Activated CD4-positive, alpha-beta T cell treated with anti-CD3 and anti-CD28 coated beads for 36 hours (primary cell): ENCODE measurements at regions of chr7 and their contacts with region 1.

Region 1: GRCh38 chr7:130912862-130913631 is 179.0 kb upstream of the KLF14 start:
- DNase-seq: peak; percentile 92
- ATAC-seq: peak; percentile 73
- H3K4me3 Mint-ChIP-seq: peak overlapping the region; percentile 88
- H3K27ac Mint-ChIP-seq: peak overlapping the region; percentile 99
- H3K4me1 Mint-ChIP-seq: peaks cover 90% of the 10 kb centered on the region
- H3K27me3 Mint-ChIP-seq: no peaks in the 10 kb centered on the region

Region 2: DNA sequence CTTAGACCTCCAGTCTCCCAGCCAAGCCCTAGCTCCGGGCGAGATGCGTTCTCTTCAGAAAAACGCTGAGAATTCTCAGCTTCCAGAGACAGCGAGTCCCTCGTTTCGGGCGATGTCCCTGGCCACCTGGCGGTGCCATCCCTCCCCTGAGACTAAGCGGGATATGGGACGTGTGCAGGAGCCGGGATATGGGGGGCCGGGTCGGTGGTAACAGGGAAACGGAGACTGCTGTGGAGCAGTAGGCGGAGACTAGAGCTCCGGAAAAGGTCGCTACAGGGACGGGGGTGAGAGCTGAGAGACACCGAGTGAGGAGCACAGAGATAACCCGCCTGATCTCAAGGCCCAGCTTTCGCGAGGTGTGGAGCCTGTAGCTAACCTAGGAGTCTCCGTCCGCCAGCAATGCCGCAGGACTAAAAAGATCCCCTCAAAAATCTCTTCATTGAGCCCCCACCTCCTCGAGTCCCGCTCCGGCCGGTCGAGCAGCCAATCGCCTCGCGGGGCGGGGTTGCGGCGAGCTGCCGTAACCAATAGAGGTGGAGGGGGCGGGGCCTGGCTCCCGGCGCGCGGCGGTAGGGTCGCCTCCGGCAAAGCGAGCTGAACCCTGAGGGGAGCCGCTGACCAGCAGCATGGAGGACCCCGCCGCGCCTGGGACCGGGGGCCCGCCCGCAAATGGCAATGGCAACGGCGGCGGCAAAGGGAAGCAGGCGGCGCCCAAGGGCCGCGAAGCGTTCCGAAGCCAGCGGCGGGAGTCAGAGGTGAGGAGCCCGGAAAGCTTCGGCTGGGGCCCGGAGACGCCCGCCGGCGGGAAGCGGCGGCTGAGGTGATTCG is 1479.0 kb before region 1 on chr7 and contains the start of gene STRIP2:
- CTCF ChIA-PET with region 1: no interaction called
- POLR2A ChIA-PET with region 1: no interaction called
- intact Hi-C with region 1: loop called in 1 of 2 experiments (anchors 5 kb)
- DNase-seq: peak; percentile 96
- ATAC-seq: peak; percentile 80
- H3K4me3 Mint-ChIP-seq: peak within 1 kb of the TSS; percentile 90
- H3K27ac Mint-ChIP-seq: peak within 1 kb of the TSS; percentile 91
- H3K4me1 Mint-ChIP-seq: peaks cover 33% of the 10 kb centered on the region
- H3K27me3 Mint-ChIP-seq: peaks cover 7% of the 10 kb centered on the region
- total RNA-seq, gene STRIP2: 41.3 to 51.8 TPM

Region 3: DNA sequence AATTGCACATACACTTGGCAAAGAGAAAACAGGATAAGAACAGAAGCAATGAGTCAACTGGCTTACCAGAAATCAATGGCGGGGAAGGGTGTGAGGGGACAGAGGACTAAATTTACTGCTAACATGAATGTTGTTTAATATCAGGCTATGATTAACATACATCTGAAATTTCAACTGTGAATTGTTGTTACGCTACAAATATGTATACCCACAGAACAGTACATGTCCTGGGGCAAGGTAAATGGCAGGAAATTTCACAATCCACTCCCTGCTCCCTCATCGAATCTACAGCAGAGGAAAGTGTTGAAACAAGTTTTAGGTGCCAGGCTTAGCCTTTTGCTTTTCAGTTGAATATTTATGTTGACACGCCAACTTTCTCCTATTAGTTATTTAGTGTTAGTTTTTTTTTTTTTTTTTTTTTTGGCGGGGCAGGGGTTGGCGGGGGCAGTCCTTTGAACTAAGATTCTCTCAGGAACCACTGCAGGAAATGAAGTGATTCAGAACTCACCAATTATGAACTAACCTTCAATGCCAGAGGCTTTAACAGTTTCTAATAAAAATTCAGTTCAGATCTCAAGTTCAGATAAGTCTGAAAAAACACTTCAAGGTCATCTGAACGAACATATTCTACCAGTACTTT is 1059.3 kb before region 1 on chr7:
- CTCF ChIA-PET with region 1: no interaction called
- POLR2A ChIA-PET with region 1: no interaction called
- intact Hi-C with region 1: no loop called
- DNase-seq: no peak
- ATAC-seq: no peak
- H3K4me3 Mint-ChIP-seq: no peak overlapping the region
- H3K27ac Mint-ChIP-seq: no peak overlapping the region
- H3K4me1 Mint-ChIP-seq: peaks cover 38% of the 10 kb centered on the region
- H3K27me3 Mint-ChIP-seq: no peaks in the 10 kb centered on the region

Region 4: GRCh38 chr7:130543487-130544010 is 369.5 kb before region 1 on chr7:
- CTCF ChIA-PET with region 1: no interaction called
- POLR2A ChIA-PET with region 1: no interaction called
- intact Hi-C with region 1: no loop called
- DNase-seq: no peak
- ATAC-seq: no peak
- H3K4me3 Mint-ChIP-seq: no peak overlapping the region
- H3K27ac Mint-ChIP-seq: no peak overlapping the region
- H3K4me1 Mint-ChIP-seq: no peaks in the 10 kb centered on the region
- H3K27me3 Mint-ChIP-seq: no peaks in the 10 kb centered on the region

Region 5: GRCh38 chr7:130838738-130839137 is 74.3 kb before region 1 on chr7:
- CTCF ChIA-PET with region 1: no interaction called
- POLR2A ChIA-PET with region 1: interaction called, 4 read pairs
- intact Hi-C with region 1: loop called in 1 of 2 experiments (anchors 2 kb)
- DNase-seq: peak; percentile 37
- ATAC-seq: peak; percentile 91
- H3K4me3 Mint-ChIP-seq: no peak overlapping the region
- H3K27ac Mint-ChIP-seq: peak overlapping the region; percentile 10
- H3K4me1 Mint-ChIP-seq: peaks cover 17% of the 10 kb centered on the region
- H3K27me3 Mint-ChIP-seq: peaks cover 30% of the 10 kb centered on the region

Region 6: GRCh38 chr7:130941322-130942210 is 28.5 kb after region 1 on chr7:
- CTCF ChIA-PET with region 1: interaction called, 11 read pairs
- POLR2A ChIA-PET with region 1: interaction called, 14 read pairs
- intact Hi-C with region 1: loop called (anchors 1 kb)
- DNase-seq: peak; percentile 54
- ATAC-seq: peak; percentile 7
- H3K4me3 Mint-ChIP-seq: peak overlapping the region; percentile 67
- H3K27ac Mint-ChIP-seq: peak overlapping the region; percentile 88
- H3K4me1 Mint-ChIP-seq: peaks cover 90% of the 10 kb centered on the region
- H3K27me3 Mint-ChIP-seq: no peaks in the 10 kb centered on the region

Region 7: GRCh38 chr7:131007394-131008330 is 94.6 kb after region 1 on chr7:
- CTCF ChIA-PET with region 1: interaction called, 3 read pairs
- POLR2A ChIA-PET with region 1: interaction called, 5 read pairs
- intact Hi-C with region 1: loop called (anchors 1 kb)
- DNase-seq: peak; percentile 80
- ATAC-seq: peak; percentile 27
- H3K4me3 Mint-ChIP-seq: peak overlapping the region; percentile 68
- H3K27ac Mint-ChIP-seq: peak overlapping the region; percentile 96
- H3K4me1 Mint-ChIP-seq: peaks cover 90% of the 10 kb centered on the region
- H3K27me3 Mint-ChIP-seq: no peaks in the 10 kb centered on the region

Region 8: DNA sequence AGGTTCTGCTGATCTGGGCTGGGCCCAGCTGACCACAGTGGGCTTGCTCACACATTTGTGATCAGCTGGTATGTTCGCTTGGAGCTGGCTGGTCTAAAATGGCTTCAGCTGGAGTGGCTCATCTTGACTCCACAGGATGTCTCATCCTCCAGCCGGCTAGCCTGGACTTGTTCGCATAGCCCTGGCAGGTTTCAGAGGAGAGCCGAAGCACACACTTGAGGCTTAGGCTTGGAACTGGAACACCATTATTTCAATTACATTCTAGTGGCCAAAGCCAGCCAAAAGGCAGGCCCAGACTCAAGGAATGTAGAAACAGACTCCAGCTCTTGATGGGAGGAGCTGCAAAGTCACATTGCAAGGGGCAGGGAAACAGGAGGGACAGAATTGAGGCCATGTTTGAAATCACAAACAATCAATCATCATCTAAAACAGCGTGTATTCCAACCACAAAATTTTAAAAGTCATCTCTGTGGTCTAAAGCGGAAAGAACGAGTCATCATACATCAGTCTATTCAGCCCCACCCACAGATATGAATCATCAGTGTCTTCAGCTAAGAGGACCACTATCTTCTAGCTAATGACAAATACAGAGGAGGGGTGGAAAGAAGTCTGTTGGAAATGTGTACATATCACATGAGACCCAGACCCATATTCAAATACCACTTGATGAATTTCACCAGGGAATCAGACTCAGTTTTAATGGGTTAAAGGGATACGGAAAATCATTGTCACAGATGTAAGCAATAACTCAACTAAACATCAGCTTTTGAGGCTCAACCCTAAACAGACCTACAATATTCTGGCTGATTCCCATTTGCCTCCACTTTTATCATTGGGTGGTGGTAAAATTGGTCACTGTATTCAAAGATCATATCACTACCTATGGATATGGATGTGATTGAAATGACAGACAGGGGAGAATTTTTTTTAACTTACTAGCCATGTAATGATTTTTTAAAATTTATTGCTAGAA is 275.6 kb after region 1 on chr7:
- CTCF ChIA-PET with region 1: interaction called, 3 read pairs
- POLR2A ChIA-PET with region 1: no interaction called
- intact Hi-C with region 1: loop called in 1 of 2 experiments (anchors 2 kb)
- DNase-seq: peak; percentile 65
- ATAC-seq: peak; percentile 84
- H3K4me3 Mint-ChIP-seq: peak overlapping the region; percentile 58
- H3K27ac Mint-ChIP-seq: peak overlapping the region; percentile 96
- H3K4me1 Mint-ChIP-seq: peaks cover 55% of the 10 kb centered on the region
- H3K27me3 Mint-ChIP-seq: no peaks in the 10 kb centered on the region